ENCODE measurements at regions of chr4 and their contacts with region 1.

Region 1: DNA sequence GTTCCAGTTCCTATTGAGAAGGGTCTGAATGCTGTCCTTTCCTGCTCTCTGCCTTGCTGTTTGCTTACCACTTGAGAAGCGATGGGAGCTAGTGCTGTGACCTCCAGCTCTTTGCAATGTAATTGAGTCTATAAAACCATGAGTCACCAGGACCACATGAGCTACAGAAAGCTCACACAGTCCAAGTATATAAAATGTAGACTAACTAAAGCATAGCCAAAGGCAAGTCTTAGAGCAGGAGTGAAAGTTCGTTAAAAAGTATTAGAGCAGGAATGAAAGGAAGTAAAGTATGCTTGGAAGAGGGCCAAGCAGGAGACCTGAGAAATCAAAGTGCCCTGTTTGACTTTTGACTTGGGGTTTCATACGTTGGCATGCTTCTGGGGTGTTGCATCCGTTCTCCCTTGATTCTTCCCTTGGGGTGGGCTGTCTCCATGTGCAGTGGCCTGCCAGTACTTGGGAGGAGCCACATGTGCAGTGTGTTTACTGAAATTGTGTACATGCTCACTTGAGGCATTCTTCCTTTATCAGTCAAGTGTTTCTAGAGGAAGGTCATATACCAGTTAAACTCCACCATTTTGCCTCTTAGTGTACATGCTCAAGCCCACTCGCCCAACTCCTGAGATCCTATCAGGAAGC is 71.3 kb upstream of the KIT start:
- DNase-seq: peak in 2 of 4 experiments; percentile 28 to 59
- ATAC-seq: peak; percentile 72
- H3K4me3 ChIP-seq: no peak overlapping the region
- H3K27ac ChIP-seq: peak overlapping the region; percentile 67
- H3K4me1 ChIP-seq: peaks cover 0 to 44% of the 10 kb centered on the region in 2 experiments; a peak in 4 of 5 replicates
- H3K27me3 ChIP-seq: no peaks in the 10 kb centered on the region
- CTCF ChIP-seq: no peak
- EP300 ChIP-seq: no peak
- POLR2A ChIP-seq: no peak
- RAD21 ChIP-seq: no peak

Region 2: DNA sequence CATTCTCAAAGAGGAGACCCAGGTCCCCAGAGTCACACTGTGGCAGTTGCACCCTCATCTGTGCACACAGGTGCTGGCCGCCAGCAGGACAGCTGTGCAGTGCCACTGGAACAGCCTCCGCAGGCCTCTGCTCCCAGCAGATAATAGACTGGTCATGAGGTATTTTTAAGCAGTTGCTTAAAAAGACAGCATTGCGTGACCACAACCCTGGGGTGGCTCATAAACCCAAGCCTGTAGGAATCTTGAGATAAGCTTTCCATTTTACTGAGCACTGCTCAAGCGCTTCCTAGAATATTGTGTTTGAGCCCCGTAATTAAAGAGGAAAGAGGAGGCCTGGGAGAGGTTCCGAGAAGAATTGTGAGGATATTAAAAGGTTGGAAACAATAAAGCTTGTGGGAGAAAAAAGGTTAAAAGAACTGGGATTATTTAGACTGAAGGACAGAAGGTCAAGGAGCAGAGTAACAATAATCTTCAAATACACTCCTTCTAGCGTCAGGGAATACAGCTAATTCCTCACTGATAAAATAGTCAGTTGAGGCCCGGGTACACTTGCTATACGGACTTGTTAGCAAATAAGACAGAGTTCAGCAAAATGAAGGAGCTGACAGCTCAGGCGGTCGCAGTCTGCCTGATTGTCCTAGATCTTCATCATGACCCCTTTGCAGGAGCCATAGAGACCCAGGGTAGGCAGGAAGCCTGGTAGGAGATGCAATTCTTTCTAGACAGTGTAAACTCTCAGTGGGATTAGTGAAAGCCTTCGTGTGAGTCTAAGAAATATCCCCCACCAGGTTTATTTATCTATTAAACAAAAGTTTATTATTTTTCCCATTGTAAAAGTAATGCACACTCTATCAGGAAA is 14.9 kb before region 1 on chr4:
- CTCF ChIA-PET with region 1: no interaction called
- POLR2A ChIA-PET with region 1: interaction called, 4 read pairs
- in situ Hi-C with region 1: no loop called
- intact Hi-C with region 1: loop called (anchors 1 kb)
- DNase-seq: peak; percentile 73 to 95 (median 84)
- ATAC-seq: peak; percentile 95
- H3K4me3 ChIP-seq: no peak overlapping the region
- H3K27ac ChIP-seq: peak overlapping the region; percentile 76
- H3K4me1 ChIP-seq: peaks cover 15 to 45% of the 10 kb centered on the region in 2 experiments
- H3K27me3 ChIP-seq: no peaks in the 10 kb centered on the region
- CTCF ChIP-seq: peak in 1 of 3 experiments; percentile 24; a peak in 2 of 6 replicates
- EP300 ChIP-seq: peak; percentile 97
- POLR2A ChIP-seq: no peak
- RAD21 ChIP-seq: peak; percentile 33 to 50